ENCODE measurements at regions of chrX and their contacts with region 1.

Region 1: DNA sequence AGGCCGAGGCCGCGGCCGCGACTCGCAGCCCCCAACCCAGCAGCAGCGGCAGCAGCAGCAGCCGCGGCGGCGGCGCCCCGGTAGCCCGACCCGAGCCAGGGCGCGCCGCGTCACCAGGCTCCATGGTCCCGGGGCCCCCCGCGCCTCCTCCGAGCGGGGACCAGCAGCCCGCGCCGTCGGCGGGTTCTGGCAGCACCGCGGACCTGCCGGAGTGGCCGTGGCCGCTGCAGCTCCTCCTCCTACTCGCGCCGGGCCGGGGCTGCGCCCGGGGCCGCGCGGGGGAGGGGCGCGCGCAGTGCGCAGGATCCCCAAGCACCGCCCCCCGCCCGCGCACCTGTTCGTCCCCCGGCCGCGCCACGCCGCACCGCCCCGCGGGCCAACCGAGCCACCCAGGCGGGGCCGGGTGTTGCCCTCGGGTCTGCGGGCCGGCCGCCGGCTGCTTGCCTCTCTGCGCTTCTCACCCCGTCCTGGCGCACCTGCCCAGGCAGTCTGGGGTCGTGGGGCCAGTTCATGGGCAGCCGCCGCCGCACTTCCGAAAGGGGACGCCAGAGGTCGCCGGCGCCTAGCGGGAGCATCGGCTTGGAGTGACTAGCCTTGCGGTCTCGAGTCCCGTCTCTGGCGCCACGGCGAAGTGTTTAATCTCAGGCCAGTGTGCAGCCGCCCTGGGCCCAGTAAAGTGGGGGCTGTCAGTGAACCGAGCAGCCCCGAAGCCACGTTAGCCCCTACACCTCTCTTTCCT is at the start of gene SLC9A7:
- DNase-seq: peak; percentile 74
- H3K4me3 Mint-ChIP-seq: peak within 1 kb of the TSS; percentile 99
- H3K27ac Mint-ChIP-seq: peak within 1 kb of the TSS; percentile 95
- H3K4me1 Mint-ChIP-seq: peaks cover 9% of the 10 kb centered on the region
- H3K27me3 Mint-ChIP-seq: peaks cover 7% of the 10 kb centered on the region
- total RNA-seq, gene SLC9A7: 36.9 and 39.6 TPM in 2 replicates

Region 2: DNA sequence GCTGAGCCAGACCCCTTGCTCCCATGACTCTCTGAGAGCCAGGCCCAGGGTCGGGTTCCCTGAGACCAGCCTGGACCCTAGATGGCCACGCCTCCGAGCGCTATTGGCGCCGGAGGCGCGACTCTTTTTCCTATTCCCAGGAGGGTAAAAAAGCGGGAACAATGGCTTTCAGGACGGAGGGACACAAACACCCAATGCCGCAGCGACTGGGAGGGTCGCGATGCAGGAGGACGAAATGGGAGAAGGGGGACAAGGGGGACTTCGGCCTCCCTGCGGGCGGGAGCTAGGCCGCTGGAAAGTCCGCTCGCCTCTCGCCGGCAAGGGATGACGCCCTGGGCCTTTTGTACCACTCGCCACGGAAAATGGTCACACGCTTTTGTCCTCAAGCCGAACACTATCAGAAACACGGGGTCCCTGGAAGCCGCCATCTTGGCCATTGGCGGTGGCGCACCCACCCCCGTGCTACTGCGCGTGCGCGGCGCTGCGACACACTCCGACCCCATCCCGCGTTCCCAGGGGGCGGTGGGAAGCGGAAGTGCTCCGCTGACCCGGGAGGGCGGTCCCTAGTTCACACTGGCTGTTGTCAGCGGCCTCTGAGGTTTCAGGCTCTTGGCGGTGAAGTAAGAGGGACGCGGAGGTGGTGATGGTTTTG is 312.2 kb before region 1 on chrX:
- intact Hi-C with region 1: loop called (anchors 2 kb)
- DNase-seq: peak; percentile 76
- H3K4me3 Mint-ChIP-seq: peak overlapping the region; percentile 84
- H3K27ac Mint-ChIP-seq: peak overlapping the region; percentile 92
- H3K4me1 Mint-ChIP-seq: peaks cover 25% of the 10 kb centered on the region
- H3K27me3 Mint-ChIP-seq: no peaks in the 10 kb centered on the region

Region 3: GRCh38 chrX:46573331-46573891 is 185.7 kb before region 1 on chrX and contains the start of gene CHST7:
- intact Hi-C with region 1: loop called (anchors 1 kb)
- DNase-seq: peak; percentile 46
- H3K4me3 Mint-ChIP-seq: peak within 1 kb of the TSS; percentile 80
- H3K27ac Mint-ChIP-seq: peak within 1 kb of the TSS; percentile 91
- H3K4me1 Mint-ChIP-seq: peaks cover 38% of the 10 kb centered on the region
- H3K27me3 Mint-ChIP-seq: no peaks in the 10 kb centered on the region
- total RNA-seq, gene CHST7: 5.2 and 6.2 TPM in 2 replicates

Region 4: DNA sequence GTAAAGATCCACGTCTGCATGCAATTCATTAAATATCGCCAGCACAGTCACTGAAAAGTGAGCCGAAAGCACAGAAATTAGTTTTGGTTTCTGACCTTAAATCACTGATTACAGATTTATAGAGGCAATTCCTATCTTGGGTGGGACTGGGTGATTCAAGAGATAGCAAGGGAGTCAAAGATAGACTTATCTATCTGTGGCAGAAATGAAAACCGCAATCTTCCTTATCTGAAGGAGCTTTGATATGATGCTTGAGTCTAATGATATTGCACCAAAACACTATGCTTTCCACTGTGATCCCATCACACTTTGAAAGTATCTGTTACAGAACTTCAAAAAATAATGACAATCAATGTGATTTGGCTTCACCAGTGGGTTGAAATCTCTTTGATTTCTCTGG is 96.5 kb before region 1 on chrX:
- intact Hi-C with region 1: no loop called
- DNase-seq: no peak
- H3K4me3 Mint-ChIP-seq: no peak overlapping the region
- H3K27ac Mint-ChIP-seq: no peak overlapping the region
- H3K4me1 Mint-ChIP-seq: peaks cover 15% of the 10 kb centered on the region
- H3K27me3 Mint-ChIP-seq: no peaks in the 10 kb centered on the region

Region 5: GRCh38 chrX:46713672-46714490 is 45.2 kb before region 1 on chrX:
- intact Hi-C with region 1: loop called (anchors 2 kb)
- DNase-seq: no peak
- H3K4me3 Mint-ChIP-seq: peak overlapping the region; percentile 39
- H3K27ac Mint-ChIP-seq: peak overlapping the region; percentile 83
- H3K4me1 Mint-ChIP-seq: peaks cover 69% of the 10 kb centered on the region
- H3K27me3 Mint-ChIP-seq: no peaks in the 10 kb centered on the region

Region 6: DNA sequence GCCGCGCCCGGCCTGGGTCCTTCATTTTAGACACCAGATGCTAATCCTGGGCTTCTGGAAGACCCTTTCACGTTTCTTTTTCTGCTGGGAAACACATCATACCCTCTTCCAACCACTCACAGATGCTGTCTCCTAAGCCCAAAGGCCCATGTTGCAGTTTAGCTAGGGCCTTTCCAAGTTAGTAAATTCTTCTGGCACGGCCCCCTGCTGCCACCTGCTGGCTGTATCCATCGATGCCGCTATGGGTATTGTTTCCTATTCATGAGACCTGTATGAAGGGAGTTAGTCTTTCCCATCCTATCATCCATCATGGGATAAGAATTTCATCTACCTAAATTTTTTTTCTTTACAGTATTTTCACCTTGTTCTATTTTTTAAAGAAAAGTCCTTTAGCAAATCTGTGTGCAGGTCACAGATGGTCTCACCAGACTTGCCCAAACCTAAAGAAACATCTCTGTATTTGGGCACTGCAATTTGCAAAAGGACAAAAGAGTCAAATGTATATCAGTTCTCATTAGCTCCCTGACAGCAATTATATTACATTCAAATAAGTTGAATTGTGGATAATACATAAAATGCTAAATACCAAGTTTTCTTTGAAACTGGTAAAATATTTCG is 37.6 kb after region 1 on chrX:
- intact Hi-C with region 1: loop called (anchors 1 kb)
- DNase-seq: peak; percentile 51
- H3K4me3 Mint-ChIP-seq: no peak overlapping the region
- H3K27ac Mint-ChIP-seq: no peak overlapping the region
- H3K4me1 Mint-ChIP-seq: peaks cover 18% of the 10 kb centered on the region
- H3K27me3 Mint-ChIP-seq: no peaks in the 10 kb centered on the region

Region 7: DNA sequence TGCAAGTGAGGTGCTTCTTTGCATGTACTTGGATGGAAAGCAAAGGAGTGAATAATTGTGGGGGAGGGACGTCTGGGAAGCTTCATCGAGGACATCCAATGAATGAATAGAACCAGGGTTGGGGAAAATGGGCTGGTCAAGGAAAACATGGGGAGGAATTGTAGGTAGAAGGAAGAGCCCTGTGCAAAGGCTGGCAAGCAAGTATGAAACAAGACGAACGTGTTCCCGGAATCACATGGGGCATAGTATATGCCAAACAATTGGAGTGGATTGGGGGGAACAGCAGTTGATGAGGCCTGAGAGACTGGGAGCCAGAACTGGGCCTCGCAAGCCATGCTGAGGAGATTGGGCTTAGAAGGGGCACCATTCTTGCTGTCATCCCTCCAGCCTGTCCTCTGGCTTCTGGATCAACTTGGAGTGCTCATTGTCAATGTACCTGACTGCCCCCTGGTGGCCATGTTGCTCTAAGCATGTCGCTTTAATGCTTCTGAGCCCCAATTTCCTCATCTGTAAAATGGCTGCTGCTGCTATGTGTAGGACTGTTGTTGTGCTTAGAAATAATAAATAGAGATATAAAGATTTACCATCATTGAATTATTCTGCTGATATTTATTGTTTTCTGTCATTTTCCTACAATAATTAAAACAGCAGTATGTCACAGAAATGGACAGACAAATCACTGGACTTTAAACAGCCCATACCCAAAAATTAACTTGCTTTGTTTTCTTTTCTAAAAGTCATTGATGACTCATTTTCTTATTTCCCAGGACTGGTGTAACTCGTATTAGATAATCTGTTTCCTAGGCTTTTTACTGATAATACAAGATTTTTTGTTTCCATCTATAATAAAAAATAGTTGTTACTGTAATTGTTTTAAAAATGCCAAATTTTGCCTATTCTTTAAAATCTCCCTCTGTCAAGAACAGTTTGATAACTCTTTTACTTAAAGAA is 219.5 kb after region 1 on chrX:
- intact Hi-C with region 1: loop called (anchors 1 kb)
- DNase-seq: peak; percentile 34
- H3K4me3 Mint-ChIP-seq: no peak overlapping the region
- H3K27ac Mint-ChIP-seq: no peak overlapping the region
- H3K4me1 Mint-ChIP-seq: no peaks in the 10 kb centered on the region
- H3K27me3 Mint-ChIP-seq: peaks cover 4% of the 10 kb centered on the region

Region 8: DNA sequence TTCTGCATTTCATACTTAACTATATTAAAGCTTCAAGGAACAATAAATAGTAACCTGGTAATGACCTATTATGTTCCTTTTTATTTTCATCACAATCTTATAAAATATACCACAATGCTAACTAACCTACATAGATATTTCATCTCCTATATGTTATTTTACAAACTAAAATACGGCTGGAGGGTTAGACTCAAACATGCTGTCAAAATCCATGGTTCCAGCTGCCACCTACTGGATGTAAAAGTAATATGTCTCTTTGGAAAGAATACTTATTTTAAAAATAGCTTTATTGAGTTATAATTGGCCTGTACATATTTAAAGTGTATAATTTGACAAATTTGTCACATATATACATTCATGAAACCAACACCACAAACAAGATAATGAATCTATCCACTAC is 334.2 kb after region 1 on chrX:
- intact Hi-C with region 1: loop called (anchors 5 kb)
- DNase-seq: no peak
- H3K4me3 Mint-ChIP-seq: no peak overlapping the region
- H3K27ac Mint-ChIP-seq: no peak overlapping the region
- H3K4me1 Mint-ChIP-seq: no peaks in the 10 kb centered on the region
- H3K27me3 Mint-ChIP-seq: peaks cover 2% of the 10 kb centered on the region

Region 9: GRCh38 chrX:47292249-47292648 is 533.2 kb after region 1 on chrX:
- intact Hi-C with region 1: no loop called
- DNase-seq: no peak
- H3K4me3 Mint-ChIP-seq: no peak overlapping the region
- H3K27ac Mint-ChIP-seq: no peak overlapping the region
- H3K4me1 Mint-ChIP-seq: no peaks in the 10 kb centered on the region
- H3K27me3 Mint-ChIP-seq: peaks cover 1% of the 10 kb centered on the region